Naive thymus-derived CD4-positive, alpha-beta T cell (primary cell): ENCODE measurements at regions of chr2 and their contacts with region 1.

Region 1: DNA sequence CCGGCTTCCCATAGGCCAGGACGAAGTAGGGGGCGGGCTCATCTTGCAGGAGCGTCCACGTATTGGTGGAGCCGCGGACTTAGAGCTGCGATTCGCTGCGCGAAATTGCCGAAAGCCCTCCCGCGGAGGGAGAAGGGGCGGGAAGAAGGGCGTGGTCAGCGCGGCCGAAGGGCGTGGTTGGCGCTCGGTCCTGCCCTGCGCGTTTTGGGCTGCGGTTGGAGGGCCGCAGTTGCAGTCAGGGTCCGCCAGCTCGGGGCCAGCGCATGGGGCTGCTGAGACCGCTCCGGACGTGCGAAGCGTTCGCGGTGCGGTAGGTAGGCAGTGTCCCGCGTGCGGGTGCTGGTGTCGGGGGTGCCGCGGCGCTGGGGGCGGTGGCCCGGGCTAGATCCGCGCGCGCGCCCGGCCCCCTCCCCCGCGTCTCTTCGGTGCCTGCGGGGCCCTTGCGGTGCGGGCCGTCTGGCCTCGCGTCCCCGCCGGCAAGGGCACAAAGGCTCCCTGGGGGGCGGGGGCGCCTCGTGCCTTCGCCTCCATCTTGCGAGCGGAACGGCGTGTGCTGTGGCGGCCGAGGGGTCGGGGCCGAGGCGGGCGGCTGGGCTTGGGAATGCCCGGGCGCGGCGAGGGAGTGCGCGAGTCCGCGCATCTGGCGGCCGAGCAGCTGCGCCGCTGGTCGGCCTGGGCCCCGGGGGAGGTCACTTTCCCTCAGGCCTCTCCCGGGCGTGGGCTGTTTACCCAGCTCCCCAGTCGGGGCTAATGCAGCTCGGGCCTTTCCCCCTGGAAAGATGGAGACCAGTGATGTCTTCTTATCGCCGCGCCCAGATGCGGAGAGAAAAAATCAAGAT is at the start of gene CEP68:
- DNase-seq: peak; percentile 88 to 96 (median 95)
- ATAC-seq: peak; percentile 96
- H3K4me3 ChIP-seq: peak within 1 kb of the TSS; percentile 54
- H3K4me3 Mint-ChIP-seq: peak within 1 kb of the TSS; percentile 79 to 99 (median 94)
- H3K27ac ChIP-seq: peak within 1 kb of the TSS; percentile 76
- H3K27ac Mint-ChIP-seq: peak within 1 kb of the TSS; percentile 84 to 97 (median 90)
- H3K4me1 ChIP-seq: peaks cover 10 to 42% of the 10 kb centered on the region in 2 donors
- H3K4me1 Mint-ChIP-seq: peaks cover 41 to 81% (median 61%) of the 10 kb centered on the region in 7 donors
- H3K27me3 ChIP-seq: no peaks in the 10 kb centered on the region
- H3K27me3 Mint-ChIP-seq: peaks cover 0 to 2% (median 0%) of the 10 kb centered on the region in 5 donors
- total RNA-seq, gene CEP68: 8.5 to 52.0 (median 20.8) TPM

Region 2: GRCh38 chr2:64609227-64609941 is 447.1 kb before region 1 on chr2:
- CTCF ChIA-PET with region 1: no interaction called
- POLR2A ChIA-PET with region 1: no interaction called
- intact Hi-C with region 1: loop called in 1 of 2 experiments (anchors 10 kb)
- DNase-seq: peak; percentile 49 to 85 (median 78)
- ATAC-seq: peak; percentile 81
- H3K4me3 ChIP-seq: peak overlapping the region; percentile 66
- H3K4me3 Mint-ChIP-seq: peak overlapping the region; percentile 61 to 86 (median 72)
- H3K27ac ChIP-seq: peak overlapping the region; percentile 64
- H3K27ac Mint-ChIP-seq: peak overlapping the region in 8 of 9 donors; percentile 51 to 82 (median 66)
- H3K4me1 ChIP-seq: peaks cover 17 to 27% of the 10 kb centered on the region in 2 donors
- H3K4me1 Mint-ChIP-seq: peaks cover 0 to 33% (median 21%) of the 10 kb centered on the region in 7 donors
- H3K27me3 ChIP-seq: no peaks in the 10 kb centered on the region
- H3K27me3 Mint-ChIP-seq: peaks cover 0 to 24% (median 0%) of the 10 kb centered on the region in 5 donors

Region 3: DNA sequence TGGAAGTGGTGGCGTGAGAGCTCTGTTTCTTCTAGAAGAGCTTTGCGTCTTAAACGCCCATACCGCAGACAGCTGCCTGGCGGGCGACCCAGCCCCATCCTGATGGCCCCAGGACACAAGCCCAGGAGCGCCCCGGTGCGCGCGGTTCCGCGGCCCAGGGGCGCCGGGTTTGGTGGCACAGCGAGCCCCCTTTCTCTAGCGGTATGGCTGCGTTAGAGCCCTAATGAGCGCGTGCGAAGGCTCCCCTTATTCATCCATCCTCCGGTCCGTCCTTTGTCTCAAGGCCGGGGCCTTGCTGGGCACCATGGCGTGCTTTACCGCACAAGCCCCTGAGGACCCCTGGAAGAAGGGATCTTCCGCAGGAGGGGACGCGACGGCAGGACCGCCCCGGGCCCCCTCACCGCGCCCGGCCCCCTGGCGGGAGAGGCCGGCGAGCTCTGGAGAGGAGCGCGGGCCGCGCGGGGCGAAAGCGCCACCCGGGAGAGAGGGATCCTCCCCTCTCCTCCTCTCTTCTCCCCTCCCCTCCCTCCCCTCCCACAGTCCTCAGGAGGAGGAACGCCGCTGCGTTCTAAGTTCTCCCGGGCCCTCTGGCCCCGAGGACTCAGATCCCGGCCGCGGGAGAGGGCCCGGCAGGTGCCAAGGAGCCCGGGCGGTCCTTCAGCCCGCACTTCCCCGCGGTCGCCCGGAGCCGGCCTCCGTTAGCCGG is 67.9 kb before region 1 on chr2:
- CTCF ChIA-PET with region 1: no interaction called
- POLR2A ChIA-PET with region 1: interaction called, 4 read pairs
- intact Hi-C with region 1: loop called (anchors 1 kb)
- DNase-seq: peak; percentile 17 to 70 (median 39)
- ATAC-seq: peak; percentile 47
- H3K4me3 ChIP-seq: peak overlapping the region; percentile 76
- H3K4me3 Mint-ChIP-seq: peak overlapping the region; percentile 80 to 92 (median 86)
- H3K27ac ChIP-seq: no peak overlapping the region
- H3K27ac Mint-ChIP-seq: peak overlapping the region in 4 of 9 donors; percentile 40 to 73 (median 44)
- H3K4me1 ChIP-seq: peaks cover 0 to 8% of the 10 kb centered on the region in 2 donors
- H3K4me1 Mint-ChIP-seq: peaks cover 16 to 62% (median 24%) of the 10 kb centered on the region in 7 donors
- H3K27me3 ChIP-seq: no peaks in the 10 kb centered on the region
- H3K27me3 Mint-ChIP-seq: peaks cover 0 to 33% (median 4%) of the 10 kb centered on the region in 5 donors

Region 4: DNA sequence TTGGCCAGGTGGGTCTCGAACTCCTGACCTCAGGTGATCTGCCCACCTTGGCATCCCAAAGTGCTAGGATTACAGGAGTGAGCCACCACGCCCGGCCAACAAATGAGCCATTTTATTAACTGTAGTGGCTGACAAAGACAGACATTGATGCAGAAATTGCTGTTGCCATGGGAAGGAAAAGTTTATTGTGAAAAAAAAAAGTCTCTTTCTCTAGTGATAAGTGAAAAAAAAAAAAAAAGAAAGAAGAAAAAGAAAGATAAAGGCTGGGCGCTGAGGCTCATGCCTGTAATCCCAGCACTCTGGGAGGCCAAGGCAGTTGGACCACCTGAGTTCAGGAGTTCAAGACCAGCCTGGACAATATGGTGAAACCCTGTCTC is 113.3 kb after region 1 on chr2:
- CTCF ChIA-PET with region 1: interaction called, 4 read pairs
- POLR2A ChIA-PET with region 1: no interaction called
- intact Hi-C with region 1: loop called in 1 of 2 experiments (anchors 2 kb)
- DNase-seq: no peak
- ATAC-seq: no peak
- H3K4me3 ChIP-seq: no peak overlapping the region
- H3K4me3 Mint-ChIP-seq: no peak overlapping the region
- H3K27ac ChIP-seq: no peak overlapping the region
- H3K27ac Mint-ChIP-seq: no peak overlapping the region
- H3K4me1 ChIP-seq: no peaks in the 10 kb centered on the region
- H3K4me1 Mint-ChIP-seq: peaks cover 0 to 2% (median under 1%) of the 10 kb centered on the region in 7 donors
- H3K27me3 ChIP-seq: no peaks in the 10 kb centered on the region
- H3K27me3 Mint-ChIP-seq: no peaks in the 10 kb centered on the region